ENCODE measurements at regions of chr22 and their contacts with region 1.

Region 1: GRCh38 chr22:36065775-36066559 is 37.3 kb upstream of the RBFOX2 start:
- DNase-seq: peak; percentile 66 to 74 (median 71)
- H3K4me3 ChIP-seq: peak overlapping the region; percentile 54 to 84 (median 66)
- H3K27ac ChIP-seq: peak overlapping the region in 1 of 2 experiments; percentile 65
- H3K4me1 ChIP-seq: peaks cover 0 to 13% (median 8%) of the 10 kb centered on the region in 4 experiments
- H3K27me3 ChIP-seq: peaks cover 0 to 6% (median 1%) of the 10 kb centered on the region in 5 experiments

Region 2: GRCh38 chr22:35930933-35931332 is 135.0 kb before region 1 on chr22:
- CTCF ChIA-PET with region 1: interaction called, 17 read pairs
- POLR2A ChIA-PET with region 1: no interaction called
- DNase-seq: peak; percentile 67 to 76 (median 74)
- H3K4me3 ChIP-seq: no peak overlapping the region
- H3K27ac ChIP-seq: no peak overlapping the region
- H3K4me1 ChIP-seq: no peaks in the 10 kb centered on the region
- H3K27me3 ChIP-seq: no peaks in the 10 kb centered on the region

Region 3: GRCh38 chr22:36022162-36022561 is 43.8 kb before region 1 on chr22:
- CTCF ChIA-PET with region 1: interaction called, 14 read pairs
- POLR2A ChIA-PET with region 1: no interaction called
- DNase-seq: peak in 2 of 3 donors; percentile 46 to 59
- H3K4me3 ChIP-seq: peak overlapping the region in 1 of 7 experiments; percentile 4
- H3K27ac ChIP-seq: no peak overlapping the region
- H3K4me1 ChIP-seq: peaks cover 14 to 35% (median 24%) of the 10 kb centered on the region in 4 experiments
- H3K27me3 ChIP-seq: no peaks in the 10 kb centered on the region

Region 4: DNA sequence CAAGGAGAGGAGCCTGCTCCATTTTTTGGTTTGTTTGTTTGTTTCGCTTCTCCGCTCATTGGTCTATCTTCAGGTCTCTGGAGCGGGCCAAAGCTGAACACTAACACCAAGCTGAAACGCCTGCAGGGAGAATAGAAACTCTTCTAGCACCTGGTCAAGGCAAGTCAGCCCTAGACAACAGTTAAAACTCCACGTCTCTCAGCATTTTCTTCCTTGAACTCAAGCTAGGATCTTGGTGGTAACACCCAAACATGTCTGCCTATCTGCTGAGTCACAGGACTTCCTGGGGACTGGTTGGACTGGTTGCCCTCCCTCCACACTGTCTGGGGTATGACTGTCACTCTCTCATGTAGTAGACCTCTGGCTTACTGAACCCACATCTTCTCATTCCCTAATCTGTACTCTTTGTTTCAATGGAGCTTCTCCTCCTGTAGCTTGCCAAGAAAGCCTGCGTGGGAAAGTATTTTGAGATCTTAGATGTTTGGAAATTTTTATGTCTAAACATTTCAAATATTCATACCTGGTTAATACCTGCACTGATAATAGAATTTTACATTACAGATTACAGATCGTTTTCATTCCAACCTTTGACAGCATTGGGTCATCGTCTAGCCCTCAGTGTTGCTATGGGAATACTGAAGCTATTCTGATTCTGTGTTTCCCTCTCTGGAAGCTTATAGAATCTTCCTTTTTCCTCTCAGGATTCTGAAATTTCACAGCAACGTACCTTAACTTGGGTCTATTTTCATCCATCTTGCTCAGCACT is 13.3 kb before region 1 on chr22:
- CTCF ChIA-PET with region 1: interaction called, 30 read pairs
- POLR2A ChIA-PET with region 1: interaction called, 4 read pairs
- DNase-seq: peak in 2 of 3 donors; percentile 53 to 73
- H3K4me3 ChIP-seq: peak overlapping the region in 1 of 7 experiments; percentile 7
- H3K27ac ChIP-seq: peak overlapping the region in 1 of 2 experiments; percentile 50
- H3K4me1 ChIP-seq: peaks cover 3 to 9% (median 6%) of the 10 kb centered on the region in 4 experiments
- H3K27me3 ChIP-seq: no peaks in the 10 kb centered on the region

Region 5: GRCh38 chr22:36086170-36086490 is 20.2 kb after region 1 on chr22:
- CTCF ChIA-PET with region 1: interaction called, 18 read pairs
- POLR2A ChIA-PET with region 1: no interaction called
- DNase-seq: no peak
- H3K4me3 ChIP-seq: no peak overlapping the region
- H3K27ac ChIP-seq: no peak overlapping the region
- H3K4me1 ChIP-seq: no peaks in the 10 kb centered on the region
- H3K27me3 ChIP-seq: no peaks in the 10 kb centered on the region